HepG2 (cell line): ENCODE measurements at regions of chr1 and their contacts with region 1.

Region 1: GRCh38 chr1:168637350-168637991 is 61.1 kb downstream of the XCL1 start:
- DNase-seq: peak; percentile 41
- ATAC-seq: peak; percentile 35; the same call in 1 of the 3 replicates
- H3K4me3 ChIP-seq: no peak overlapping the region
- H3K27ac ChIP-seq: no peak overlapping the region
- H3K4me1 ChIP-seq: peaks cover 10% of the 10 kb centered on the region
- H3K27me3 ChIP-seq: no peaks in the 10 kb centered on the region
- CTCF ChIP-seq: peak; percentile 78
- EP300 ChIP-seq: no peak
- POLR2A ChIP-seq: no peak
- RAD21 ChIP-seq: peak; percentile 28; the same call in 1 of the 2 replicates

Region 2: GRCh38 chr1:168673974-168674683 is 36.7 kb after region 1 on chr1:
- CTCF ChIA-PET with region 1: no interaction called
- POLR2A ChIA-PET with region 1: no interaction called
- in situ Hi-C with region 1: no loop called
- intact Hi-C with region 1: no loop called
- DNase-seq: no peak
- ATAC-seq: no peak
- H3K4me3 ChIP-seq: no peak overlapping the region
- H3K27ac ChIP-seq: no peak overlapping the region
- H3K4me1 ChIP-seq: no peaks in the 10 kb centered on the region
- H3K27me3 ChIP-seq: peaks cover 0 to 4% of the 10 kb centered on the region in 2 experiments; a peak in 1 of 5 replicates
- CTCF ChIP-seq: no peak
- EP300 ChIP-seq: no peak
- POLR2A ChIP-seq: no peak
- RAD21 ChIP-seq: no peak

Region 3: GRCh38 chr1:168987332-168987731 is 349.9 kb after region 1 on chr1:
- CTCF ChIA-PET with region 1: no interaction called
- POLR2A ChIA-PET with region 1: no interaction called
- in situ Hi-C with region 1: no loop called
- intact Hi-C with region 1: loop called (anchors 10 kb)
- DNase-seq: no peak
- ATAC-seq: peak; percentile 66
- H3K4me3 ChIP-seq: no peak overlapping the region
- H3K27ac ChIP-seq: no peak overlapping the region
- H3K4me1 ChIP-seq: no peaks in the 10 kb centered on the region
- H3K27me3 ChIP-seq: no peaks in the 10 kb centered on the region
- CTCF ChIP-seq: peak; percentile 64
- EP300 ChIP-seq: no peak
- POLR2A ChIP-seq: no peak
- RAD21 ChIP-seq: no peak